Endothelial cell of umbilical vein (primary cell): ENCODE measurements at regions of chr19 and their contacts with region 1.

Region 1: DNA sequence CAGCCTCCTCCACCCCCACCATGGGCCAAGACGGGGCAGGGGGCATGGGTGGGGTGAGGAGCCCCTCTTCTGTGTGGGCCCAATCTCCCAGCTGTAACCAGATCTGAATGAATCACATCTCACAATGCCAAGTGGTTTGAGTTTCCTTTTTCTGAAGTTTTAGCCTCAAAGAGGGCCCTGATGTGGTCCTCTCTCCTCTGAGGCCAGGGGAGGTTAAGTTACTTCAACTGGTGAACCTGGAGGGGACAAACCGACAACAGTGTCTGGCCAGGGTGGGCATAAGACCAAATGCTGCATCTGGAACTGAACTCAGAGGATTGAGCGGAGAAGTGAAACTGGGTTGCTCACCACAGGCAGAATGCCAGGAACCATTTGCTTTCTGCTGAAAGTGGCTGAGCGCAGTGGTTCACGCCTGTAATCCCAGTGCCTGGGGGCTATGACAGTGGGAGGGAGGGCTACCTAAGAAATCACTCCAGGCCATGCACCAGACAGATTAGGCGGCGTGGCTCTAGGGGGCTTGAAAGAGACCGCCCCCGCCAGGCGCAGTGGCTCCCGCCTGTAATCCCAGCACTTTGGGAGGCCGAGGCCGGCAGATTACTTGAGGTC is 15.4 kb upstream of the IRGC start:
- DNase-seq: peak; percentile 69
- H3K4me3 ChIP-seq: no peak overlapping the region
- H3K27ac ChIP-seq: peak overlapping the region; percentile 95
- H3K4me1 ChIP-seq: peaks cover 12% of the 10 kb centered on the region
- H3K27me3 ChIP-seq: no peaks in the 10 kb centered on the region
- CTCF ChIP-seq: no peak
- POLR2A ChIP-seq: no peak

Region 2: GRCh38 chr19:43723588-43723987 is 23.1 kb after region 1 on chr19:
- CTCF ChIA-PET with region 1: interaction called, 11 read pairs
- POLR2A ChIA-PET with region 1: interaction called, 3 read pairs
- dilution Hi-C with region 1: no loop called
- intact Hi-C with region 1: loop called (anchors 1 kb)
- DNase-seq: no peak
- H3K4me3 ChIP-seq: no peak overlapping the region
- H3K27ac ChIP-seq: no peak overlapping the region
- H3K4me1 ChIP-seq: peaks cover 5% of the 10 kb centered on the region
- H3K27me3 ChIP-seq: no peaks in the 10 kb centered on the region
- CTCF ChIP-seq: no peak
- POLR2A ChIP-seq: no peak